Activated CD4-positive, alpha-beta memory T cell treated with anti-CD3 and anti-CD28 coated beads for 36 hours (primary cell): ENCODE measurements at regions of chr11 and their contacts with region 1.

Region 1: DNA sequence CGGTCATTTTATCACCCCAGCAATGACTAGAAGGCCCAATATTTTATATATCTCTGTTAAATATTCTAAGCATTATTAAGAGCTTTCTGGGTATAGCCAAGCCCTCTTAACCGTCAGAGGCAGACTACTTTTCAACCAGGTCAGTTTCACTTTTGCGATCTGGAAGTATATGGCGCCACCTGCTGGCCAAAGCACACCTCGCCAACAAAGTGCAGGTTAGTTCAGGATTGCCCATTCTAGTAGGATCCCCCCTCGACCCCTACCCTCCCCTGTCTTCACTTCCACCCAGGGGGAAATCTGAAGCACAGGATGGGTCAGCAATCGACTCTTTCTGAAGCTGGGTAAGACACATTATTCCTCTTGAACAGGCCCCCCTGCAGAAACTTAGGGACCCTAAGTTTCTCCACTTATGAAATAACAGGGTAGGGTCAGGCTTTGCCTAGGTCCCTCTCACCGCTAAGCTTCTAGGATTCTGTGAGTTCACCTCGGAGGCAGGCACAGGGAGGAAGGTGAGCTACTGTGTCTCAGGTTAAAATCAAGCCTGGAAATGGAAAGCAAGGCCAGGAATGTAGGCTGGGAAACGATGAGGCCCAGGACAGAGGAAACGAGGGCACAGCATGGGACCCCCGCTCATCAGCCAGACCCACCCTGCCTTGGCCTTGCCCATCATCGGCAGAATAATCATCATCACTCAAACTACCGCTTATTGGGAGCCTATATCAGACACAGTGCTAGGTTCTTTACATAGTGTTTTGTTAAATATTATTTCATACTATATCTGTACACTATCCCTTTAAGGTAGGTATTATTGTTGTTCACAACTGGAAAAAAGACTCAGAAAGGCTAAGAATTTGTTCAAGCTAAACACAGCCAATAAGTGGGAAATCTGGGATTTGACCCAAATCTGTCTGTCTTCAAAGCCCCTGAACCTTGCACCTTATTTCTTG is 35.6 kb downstream of the KCNJ1 start:
- DNase-seq: peak; percentile 93
- H3K4me3 Mint-ChIP-seq: peak overlapping the region; percentile 30
- H3K27ac Mint-ChIP-seq: peak overlapping the region; percentile 89
- H3K4me1 Mint-ChIP-seq: peaks cover 19% of the 10 kb centered on the region
- H3K27me3 Mint-ChIP-seq: no peaks in the 10 kb centered on the region

Region 2: DNA sequence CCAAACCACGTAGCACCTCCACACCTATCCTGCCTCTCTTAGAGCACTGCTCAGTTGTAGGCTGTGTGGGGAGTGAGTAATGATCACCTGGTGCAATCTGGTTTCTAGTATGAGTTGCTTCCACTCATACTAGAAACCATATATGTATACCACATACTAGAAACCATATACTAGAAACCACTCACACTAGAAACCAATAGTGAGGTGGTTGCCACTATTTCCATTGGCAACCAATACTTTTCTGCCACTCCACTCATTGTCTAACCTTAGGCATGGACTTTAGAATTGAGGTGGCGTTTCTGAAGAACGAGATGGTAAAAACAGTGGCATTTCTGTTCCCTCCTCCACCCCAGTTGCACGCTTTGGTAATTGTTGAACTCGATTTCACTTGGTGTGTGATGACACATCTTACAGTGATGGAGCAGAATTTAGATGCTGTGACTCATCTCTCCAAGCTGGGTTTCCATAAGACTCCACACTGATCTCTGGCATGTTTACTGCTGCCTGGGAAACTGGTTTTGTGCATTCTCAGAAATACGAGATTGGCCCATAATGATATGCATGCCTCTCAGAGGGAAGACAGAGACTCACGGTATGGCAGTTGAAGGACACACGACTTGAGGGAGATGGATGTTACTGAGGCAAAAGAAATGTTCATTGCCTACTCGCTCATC is 1913.8 kb before region 1 on chr11:
- CTCF ChIA-PET with region 1: no interaction called
- POLR2A ChIA-PET with region 1: no interaction called
- intact Hi-C with region 1: loop called (anchors 10 kb)
- DNase-seq: peak; percentile 35
- H3K4me3 Mint-ChIP-seq: no peak overlapping the region
- H3K27ac Mint-ChIP-seq: no peak overlapping the region
- H3K4me1 Mint-ChIP-seq: peaks cover 4% of the 10 kb centered on the region
- H3K27me3 Mint-ChIP-seq: no peaks in the 10 kb centered on the region

Region 3: DNA sequence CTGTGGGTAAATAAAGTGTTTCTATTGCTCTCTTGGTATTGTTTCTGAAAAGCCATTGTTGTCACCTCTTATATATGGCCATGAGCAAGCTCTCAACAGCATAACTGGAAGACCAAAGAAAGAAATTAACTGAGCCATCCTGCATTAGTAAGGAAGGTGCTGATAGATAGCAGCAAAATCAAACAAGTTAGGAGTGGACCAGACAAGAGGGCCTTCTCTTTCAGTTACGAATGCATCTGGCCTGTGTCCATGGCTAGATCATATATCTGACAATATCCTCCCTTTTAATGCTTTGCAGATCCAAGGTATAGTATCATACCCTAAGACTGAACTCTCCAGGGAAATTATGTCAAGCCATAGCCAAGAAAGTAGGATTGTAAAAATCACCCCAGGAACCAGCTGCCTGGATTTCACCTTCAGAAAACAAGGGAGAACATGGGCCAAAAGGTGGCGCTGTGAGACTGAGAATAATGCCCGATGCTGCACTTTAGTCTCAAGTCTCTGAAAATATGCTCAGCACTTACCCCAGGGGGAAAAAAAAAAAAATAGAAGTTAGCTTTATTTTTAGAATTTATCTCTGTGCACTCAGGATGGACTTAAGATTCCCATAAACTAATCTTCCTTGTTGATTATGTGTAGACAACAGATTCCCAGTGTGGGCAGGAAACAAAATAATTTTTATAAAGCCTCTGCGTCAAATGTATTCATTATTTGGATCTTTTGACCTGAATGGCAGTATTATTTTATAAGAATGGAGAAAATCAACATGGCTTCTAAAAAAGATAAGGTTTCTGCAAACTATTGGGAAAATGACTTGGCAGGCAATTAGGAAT is 659.2 kb before region 1 on chr11:
- CTCF ChIA-PET with region 1: interaction called, 76 read pairs
- POLR2A ChIA-PET with region 1: no interaction called
- intact Hi-C with region 1: loop called (anchors 1 kb)
- DNase-seq: peak; percentile 91
- H3K4me3 Mint-ChIP-seq: no peak overlapping the region
- H3K27ac Mint-ChIP-seq: peak overlapping the region; percentile 25
- H3K4me1 Mint-ChIP-seq: peaks cover 17% of the 10 kb centered on the region
- H3K27me3 Mint-ChIP-seq: no peaks in the 10 kb centered on the region

Region 4: GRCh38 chr11:128776424-128777284 is 54.8 kb before region 1 on chr11:
- CTCF ChIA-PET with region 1: interaction called, 25 read pairs
- POLR2A ChIA-PET with region 1: no interaction called
- intact Hi-C with region 1: loop called (anchors 2 kb)
- DNase-seq: peak; percentile 48
- H3K4me3 Mint-ChIP-seq: no peak overlapping the region
- H3K27ac Mint-ChIP-seq: peak overlapping the region; percentile 53
- H3K4me1 Mint-ChIP-seq: peaks cover 41% of the 10 kb centered on the region
- H3K27me3 Mint-ChIP-seq: no peaks in the 10 kb centered on the region

Region 5: GRCh38 chr11:128848815-128849455 is 17.5 kb after region 1 on chr11:
- CTCF ChIA-PET with region 1: interaction called, 24 read pairs
- POLR2A ChIA-PET with region 1: no interaction called
- intact Hi-C with region 1: no loop called
- DNase-seq: peak; percentile 82
- H3K4me3 Mint-ChIP-seq: no peak overlapping the region
- H3K27ac Mint-ChIP-seq: no peak overlapping the region
- H3K4me1 Mint-ChIP-seq: peaks cover 23% of the 10 kb centered on the region
- H3K27me3 Mint-ChIP-seq: no peaks in the 10 kb centered on the region